ENCODE measurements at regions of chr16 and their contacts with region 1.

Region 1: GRCh38 chr16:66786551-66786950 is 14.8 kb downstream of the TERB1 start:
- DNase-seq: no peak
- H3K4me3 ChIP-seq: no peak overlapping the region
- H3K27ac ChIP-seq: no peak overlapping the region
- H3K4me1 ChIP-seq: no peaks in the 10 kb centered on the region
- H3K27me3 ChIP-seq: no peaks in the 10 kb centered on the region
- CTCF ChIP-seq: no peak

Region 2: DNA sequence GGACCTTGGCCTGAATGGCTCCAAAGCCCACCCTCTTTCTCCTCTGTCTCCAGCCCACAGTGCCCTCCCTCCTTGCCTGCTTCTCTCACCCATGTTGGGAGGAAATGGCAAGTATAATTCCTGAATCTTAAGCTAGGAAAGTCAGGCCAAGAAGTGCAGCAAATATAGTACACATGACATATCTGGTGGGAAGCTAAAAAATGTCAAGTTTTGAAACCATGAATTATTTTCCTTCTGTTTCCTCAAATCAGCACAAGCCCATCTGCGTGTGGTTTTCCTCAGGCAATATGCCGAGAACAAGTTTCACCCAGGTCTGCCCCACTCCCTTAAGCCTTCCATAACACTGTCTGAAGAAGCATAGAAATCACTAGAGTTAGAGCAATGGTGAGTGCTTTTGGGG is 1161.9 kb before region 1 on chr16:
- intact Hi-C with region 1: no loop called
- DNase-seq: no peak
- H3K4me3 ChIP-seq: no peak overlapping the region
- H3K27ac ChIP-seq: no peak overlapping the region
- H3K4me1 ChIP-seq: no peaks in the 10 kb centered on the region
- H3K27me3 ChIP-seq: no peaks in the 10 kb centered on the region
- CTCF ChIP-seq: no peak

Region 3: GRCh38 chr16:66844342-66845079 is 58.0 kb after region 1 on chr16 and contains the start of gene CA7:
- intact Hi-C with region 1: loop called (anchors 10 kb)
- DNase-seq: no peak
- H3K4me3 ChIP-seq: peak within 1 kb of the TSS; percentile 34
- H3K27ac ChIP-seq: no peak within 1 kb of the TSS
- H3K4me1 ChIP-seq: no peaks in the 10 kb centered on the region
- H3K27me3 ChIP-seq: peaks cover 20% of the 10 kb centered on the region
- CTCF ChIP-seq: no peak
- total RNA-seq, gene CA7: 46.2 to 120 TPM